BJ (cell line): ENCODE measurements at regions of chr14 and their contacts with region 1.

Region 1: DNA sequence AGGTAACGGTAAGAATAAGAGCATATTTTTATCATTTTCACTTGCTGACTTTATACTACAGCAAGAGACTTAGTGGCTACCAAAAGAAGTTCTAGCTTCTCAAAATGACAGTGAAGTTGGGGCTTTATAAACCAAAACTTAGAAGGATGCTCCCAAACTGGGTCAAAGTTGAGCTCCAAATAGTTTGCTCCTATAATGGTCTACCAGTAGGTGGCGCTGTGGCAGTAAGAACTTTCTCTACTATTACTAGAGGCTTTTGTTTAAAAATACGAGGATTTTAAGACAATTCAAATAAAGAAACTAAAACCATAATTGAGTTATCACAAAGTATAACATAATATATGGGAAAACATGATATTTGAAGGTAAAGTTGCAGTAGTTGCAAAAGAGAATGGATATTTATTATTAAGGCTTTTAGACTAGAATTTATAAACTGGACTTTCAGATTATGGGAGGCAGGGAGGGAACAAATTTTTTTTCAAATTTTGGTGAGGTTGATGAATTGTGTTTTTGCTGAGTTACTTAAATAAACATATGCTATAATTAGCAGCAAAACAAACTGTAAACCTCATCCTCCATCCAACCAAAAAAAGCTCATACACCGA is 75.0 kb downstream of the TGFB3 start:
- DNase-seq: no peak
- H3K4me3 ChIP-seq: no peak overlapping the region
- H3K27me3 ChIP-seq: no peaks in the 10 kb centered on the region
- CTCF ChIP-seq: peak; percentile 85

Region 2: DNA sequence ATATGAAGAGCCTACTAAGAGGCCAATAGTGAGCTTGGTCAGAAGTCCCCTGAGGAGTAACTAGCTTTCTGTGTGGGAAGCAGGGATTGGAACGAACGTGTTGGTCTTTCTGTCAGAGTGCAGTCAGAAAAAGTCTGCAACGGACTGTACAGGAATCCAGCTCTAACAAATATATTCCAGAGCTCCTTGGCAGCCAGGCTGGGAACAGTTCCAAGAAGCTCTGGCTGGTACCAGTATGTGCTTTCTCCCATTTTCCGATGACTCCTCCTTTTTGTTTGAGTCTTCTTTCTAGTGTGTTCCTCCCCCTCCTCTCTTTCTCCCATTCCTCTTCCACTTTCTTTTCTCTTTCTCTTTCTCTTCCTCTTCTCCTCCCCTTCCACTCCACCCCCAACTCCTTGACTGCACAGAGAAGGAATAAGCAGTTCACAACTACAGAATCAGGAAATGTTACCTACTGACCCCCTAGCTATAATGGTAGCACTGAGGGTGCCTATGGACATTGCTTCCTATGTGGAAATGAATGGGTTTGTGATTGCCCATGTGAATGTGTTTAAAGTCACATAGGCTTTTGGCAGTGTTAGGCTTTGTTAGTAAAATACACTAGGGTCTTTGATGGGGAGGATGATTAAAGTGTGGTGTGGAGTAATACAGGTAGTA is 185.8 kb before region 1 on chr14:
- CTCF ChIA-PET with region 1: no interaction called
- POLR2A ChIA-PET with region 1: no interaction called
- DNase-seq: no peak
- H3K4me3 ChIP-seq: no peak overlapping the region
- H3K27me3 ChIP-seq: no peaks in the 10 kb centered on the region
- CTCF ChIP-seq: no peak

Region 3: GRCh38 chr14:75794615-75795038 is 112.2 kb before region 1 on chr14:
- CTCF ChIA-PET with region 1: interaction called, 20 read pairs
- POLR2A ChIA-PET with region 1: no interaction called
- DNase-seq: peak; percentile 10
- H3K4me3 ChIP-seq: no peak overlapping the region
- H3K27me3 ChIP-seq: no peaks in the 10 kb centered on the region
- CTCF ChIP-seq: peak; percentile 55

Region 4: DNA sequence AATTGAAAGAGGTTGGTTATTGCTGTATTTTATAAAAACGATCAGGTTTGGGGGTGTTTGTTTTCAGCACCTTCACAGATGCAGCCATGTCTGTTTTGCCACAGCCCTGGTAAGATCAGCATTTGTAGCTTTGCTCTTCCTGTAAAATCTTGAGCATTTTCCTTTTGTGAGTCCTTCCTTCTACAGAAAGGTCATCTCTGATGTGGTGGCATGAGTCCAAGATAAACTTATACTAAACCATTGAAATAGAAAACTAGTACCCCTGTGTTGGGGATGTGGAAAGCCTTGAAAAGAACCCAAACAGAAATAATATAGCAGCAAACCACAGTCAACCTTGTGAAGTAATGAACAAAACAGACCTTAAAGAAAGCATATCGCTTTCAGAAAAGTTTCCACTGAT is 10.4 kb before region 1 on chr14:
- CTCF ChIA-PET with region 1: interaction called, 47 read pairs
- POLR2A ChIA-PET with region 1: no interaction called
- DNase-seq: no peak
- H3K4me3 ChIP-seq: no peak overlapping the region
- H3K27me3 ChIP-seq: no peaks in the 10 kb centered on the region
- CTCF ChIP-seq: no peak

Region 5: GRCh38 chr14:75941030-75941429 is 34.3 kb after region 1 on chr14:
- CTCF ChIA-PET with region 1: interaction called, 11 read pairs
- POLR2A ChIA-PET with region 1: no interaction called
- DNase-seq: no peak
- H3K4me3 ChIP-seq: no peak overlapping the region
- H3K27me3 ChIP-seq: no peaks in the 10 kb centered on the region
- CTCF ChIP-seq: no peak

Region 6: DNA sequence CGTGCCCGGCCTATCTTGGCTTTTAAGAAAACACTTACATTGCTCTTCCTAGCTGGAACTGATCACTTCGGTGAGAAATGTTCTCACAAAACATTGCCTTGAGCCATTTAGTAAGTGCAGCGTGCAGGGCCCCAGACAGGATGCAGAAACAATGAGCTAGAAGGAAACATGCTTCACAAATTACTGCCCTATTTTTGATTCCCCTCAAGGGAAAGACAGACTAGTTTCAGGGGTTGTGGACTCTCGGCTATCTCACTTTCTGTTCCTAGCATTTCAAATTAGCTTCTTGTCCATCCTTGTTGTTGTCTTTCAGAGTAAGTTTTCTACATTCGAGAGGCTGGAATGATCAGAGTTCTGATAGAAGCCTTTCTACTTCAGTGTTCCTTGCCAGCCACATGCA is 53.5 kb after region 1 on chr14:
- CTCF ChIA-PET with region 1: interaction called, 12 read pairs
- POLR2A ChIA-PET with region 1: no interaction called
- DNase-seq: no peak
- H3K4me3 ChIP-seq: no peak overlapping the region
- H3K27me3 ChIP-seq: no peaks in the 10 kb centered on the region
- CTCF ChIP-seq: no peak

Region 7: DNA sequence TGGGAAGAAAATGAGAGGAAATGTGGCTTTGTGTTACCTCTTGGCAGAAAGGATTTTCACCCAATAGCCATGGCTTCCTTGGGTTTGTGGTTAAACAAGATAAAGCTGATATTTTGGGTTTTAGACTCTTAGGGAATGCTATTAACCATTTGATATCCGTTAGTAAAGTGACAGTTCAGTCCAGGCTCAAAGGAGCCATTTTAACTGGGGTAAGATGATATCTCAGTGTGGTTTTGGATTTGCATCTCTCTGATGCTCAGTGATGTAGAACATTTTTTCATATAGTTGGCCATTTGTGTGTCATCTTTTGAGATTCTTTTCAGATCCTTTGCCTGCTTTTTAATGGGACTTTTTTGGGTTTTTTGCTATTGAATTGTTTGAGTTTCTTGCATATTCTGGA is 108.9 kb after region 1 on chr14:
- CTCF ChIA-PET with region 1: no interaction called
- POLR2A ChIA-PET with region 1: no interaction called
- DNase-seq: no peak
- H3K4me3 ChIP-seq: no peak overlapping the region
- H3K27me3 ChIP-seq: no peaks in the 10 kb centered on the region
- CTCF ChIP-seq: no peak

Region 8: GRCh38 chr14:76067536-76067935 is 160.8 kb after region 1 on chr14:
- CTCF ChIA-PET with region 1: no interaction called
- POLR2A ChIA-PET with region 1: no interaction called
- DNase-seq: no peak
- H3K4me3 ChIP-seq: no peak overlapping the region
- H3K27me3 ChIP-seq: no peaks in the 10 kb centered on the region
- CTCF ChIP-seq: no peak